Left cardiac atrium (tissue), 4 donors: ENCODE measurements at regions of chr11 and their contacts with region 1.

Region 1: GRCh38 chr11:47285969-47286770 is 16.2 kb downstream of the MADD start:
- DNase-seq: no peak
- ATAC-seq: peak; percentile 43 to 56

Region 2: GRCh38 chr11:47124675-47125074 is 161.5 kb before region 1 on chr11:
- intact Hi-C with region 1: no loop called
- DNase-seq: no peak
- ATAC-seq: no peak

Region 3: GRCh38 chr11:47225552-47226400 is 60.4 kb before region 1 on chr11:
- intact Hi-C with region 1: no loop called
- DNase-seq: no peak
- ATAC-seq: no peak

Region 4: DNA sequence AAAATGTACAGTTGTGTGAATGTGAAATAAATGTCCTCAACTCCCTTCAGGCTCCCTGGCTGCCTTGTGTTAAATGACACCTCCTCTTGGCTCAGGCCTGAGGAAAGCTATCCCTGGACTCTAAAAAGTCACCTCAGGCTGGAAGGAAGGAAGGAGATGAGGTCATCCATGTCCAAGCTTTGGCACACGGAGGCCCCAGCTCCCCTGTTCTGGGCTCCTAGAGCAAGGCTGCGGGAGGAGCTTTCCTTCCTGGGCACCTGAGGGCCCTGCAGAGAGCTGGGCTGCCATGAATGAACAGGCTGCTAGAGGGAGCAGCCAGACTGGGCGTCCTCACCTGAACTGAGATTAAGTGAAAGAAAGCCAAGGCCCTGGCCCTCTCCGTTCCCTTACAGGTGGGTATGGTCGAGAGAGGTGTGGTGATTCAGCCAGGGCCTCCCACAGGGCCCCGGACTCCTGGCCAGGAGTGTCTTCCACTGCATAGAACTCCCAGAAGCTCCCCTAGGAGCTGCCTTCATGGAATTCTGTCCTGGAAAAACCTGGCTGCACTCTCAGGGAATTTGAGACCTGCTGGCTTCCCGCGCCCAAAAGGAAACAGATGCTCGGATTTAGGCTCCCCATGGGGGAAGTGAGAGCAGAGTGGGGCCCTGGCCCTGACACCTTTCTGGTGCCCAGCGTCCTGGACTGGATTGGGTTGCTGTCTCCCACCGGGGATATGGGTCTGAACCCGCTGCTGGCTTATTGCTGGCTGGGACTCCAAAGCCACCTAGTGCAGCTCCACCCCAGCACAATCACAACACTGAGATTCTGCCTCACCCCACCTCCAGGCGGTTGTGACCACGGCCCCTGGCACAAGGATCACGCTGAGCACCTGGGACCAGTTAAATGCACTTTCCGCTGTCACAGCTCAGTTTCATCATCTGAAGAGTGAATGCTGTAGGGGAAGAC is 44.1 kb after region 1 on chr11:
- intact Hi-C with region 1: loop called in 1 of 2 experiments (anchors 5 kb)
- DNase-seq: no peak
- ATAC-seq: peak; percentile 34 to 40

Region 5: DNA sequence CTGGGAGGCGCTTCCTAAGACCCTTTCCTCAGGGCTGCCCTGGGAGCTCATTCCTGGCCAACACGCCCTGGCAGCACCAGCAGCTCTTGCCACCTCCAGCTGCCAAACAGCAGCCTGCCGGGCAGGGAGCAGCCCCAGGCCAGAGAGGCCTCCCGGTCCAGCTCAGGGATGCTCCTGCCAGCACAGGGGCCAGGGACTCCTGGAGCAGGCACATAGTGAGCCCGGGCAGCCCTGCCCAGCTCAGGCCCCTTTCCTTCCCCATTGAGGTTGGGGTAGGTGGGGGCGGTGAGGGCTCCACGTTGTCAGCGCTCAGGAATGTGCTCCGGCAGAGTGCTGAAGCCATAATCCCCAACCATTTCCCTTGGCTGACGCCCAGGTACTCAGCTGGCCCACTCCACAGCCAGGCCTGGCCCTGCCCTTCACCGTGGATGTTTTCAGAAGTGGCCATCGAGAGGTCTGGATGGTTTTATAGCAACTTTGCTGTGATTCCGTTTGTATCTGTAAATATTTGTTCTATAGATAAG is 129.8 kb after region 1 on chr11:
- intact Hi-C with region 1: no loop called
- DNase-seq: peak; percentile 90
- ATAC-seq: peak; percentile 82 to 90